Left ventricle myocardium inferior (tissue), 1 donor: ENCODE measurements at regions of chr7 and their contacts with region 1.

Region 1: DNA sequence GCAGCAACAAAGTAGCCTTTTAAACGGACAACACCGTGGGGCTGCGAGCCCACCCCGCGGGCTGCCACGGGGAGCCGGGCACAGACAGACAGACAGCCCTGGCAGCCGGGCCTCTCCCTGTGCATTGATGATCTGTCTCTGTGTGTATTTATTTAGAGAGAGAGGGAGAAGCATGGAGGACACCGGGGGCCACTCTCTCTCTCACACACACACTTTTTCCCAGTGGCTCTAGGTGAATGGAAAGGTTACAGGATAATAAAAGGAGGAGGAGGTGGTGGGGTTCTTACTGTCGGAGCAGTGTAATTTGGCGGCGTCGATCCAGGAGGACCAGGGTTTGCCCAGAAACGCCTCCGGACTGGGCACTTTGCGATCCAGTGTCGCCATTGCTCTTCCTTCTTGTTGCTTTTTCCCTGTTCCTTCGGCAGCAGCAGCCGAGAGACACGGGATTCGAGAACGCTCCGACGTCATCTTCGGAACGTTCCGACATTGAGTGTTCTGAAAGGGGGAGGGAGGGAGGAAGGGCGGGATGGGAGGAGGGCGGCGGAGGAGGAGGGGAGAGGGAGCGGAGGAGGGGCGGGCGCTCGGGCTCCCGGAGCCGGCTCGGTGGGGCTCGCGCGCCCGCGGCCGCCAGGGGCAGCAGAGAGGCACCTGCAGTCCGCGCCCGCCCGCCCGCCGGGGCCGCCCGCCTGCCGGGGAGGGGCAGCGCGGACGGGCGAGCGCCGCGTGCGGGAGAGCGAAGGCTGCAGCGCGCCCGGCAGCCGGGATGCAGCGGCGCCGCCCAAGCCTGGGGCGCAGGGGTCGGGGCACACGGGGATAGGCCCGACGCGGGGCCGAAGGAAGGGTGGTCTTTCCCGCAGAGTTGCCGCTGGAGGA is at the start of gene ATXN7L1:
- DNase-seq: peak; percentile 94
- H3K4me3 ChIP-seq: peak within 1 kb of the TSS; percentile 90
- H3K27ac ChIP-seq: peak within 1 kb of the TSS; percentile 80
- H3K4me1 ChIP-seq: peaks cover 43% of the 10 kb centered on the region
- H3K27me3 ChIP-seq: no peaks in the 10 kb centered on the region
- CTCF ChIP-seq: peak; percentile 71
- total RNA-seq, gene ATXN7L1: 6.2 TPM

Region 2: DNA sequence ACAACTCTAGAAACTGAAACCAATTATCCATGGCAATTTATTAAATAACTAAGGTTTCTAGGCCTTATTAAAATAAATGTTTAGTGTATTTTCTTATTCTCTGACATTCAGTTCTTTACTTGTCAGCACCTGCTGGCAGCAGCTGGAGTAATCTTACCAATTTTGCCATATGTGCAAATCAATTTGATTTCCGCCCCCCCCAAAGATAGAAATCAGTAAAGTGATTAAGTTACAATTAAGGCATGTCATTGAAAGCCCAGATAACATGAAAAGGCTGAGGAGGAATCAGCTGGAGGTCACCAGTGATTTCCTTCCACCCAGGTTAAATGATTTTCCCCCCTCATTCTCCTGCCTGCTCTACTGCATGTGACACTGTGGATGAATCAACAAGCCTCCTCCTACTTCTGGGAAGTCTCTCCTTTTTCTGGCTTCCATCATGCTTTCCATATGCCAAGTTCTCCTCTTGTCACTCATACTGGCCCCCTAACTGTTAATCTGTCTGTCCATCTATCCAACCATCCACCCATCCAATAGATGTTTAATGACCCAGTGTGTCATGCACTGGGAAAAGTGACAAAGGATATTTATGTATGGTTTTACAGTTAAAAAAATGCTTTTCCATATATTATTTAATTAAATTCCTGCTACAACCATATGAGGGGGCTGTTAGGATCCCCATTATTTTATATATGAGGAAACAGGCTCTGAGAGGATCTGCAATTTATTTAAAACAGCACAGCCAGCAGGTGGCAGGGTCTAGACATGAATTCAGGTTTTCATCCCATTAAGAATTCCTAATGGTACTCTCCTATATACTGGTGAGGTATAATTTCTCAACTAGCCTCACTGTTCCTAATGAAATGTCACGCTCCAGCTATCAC is 116.4 kb before region 1 on chr7:
- intact Hi-C with region 1: loop called (anchors 10 kb)
- DNase-seq: no peak
- H3K4me3 ChIP-seq: no peak overlapping the region
- H3K27ac ChIP-seq: no peak overlapping the region
- H3K4me1 ChIP-seq: no peaks in the 10 kb centered on the region
- H3K27me3 ChIP-seq: no peaks in the 10 kb centered on the region
- CTCF ChIP-seq: peak; percentile 70